ENCODE measurements at regions of chr9 and their contacts with region 1.

Region 1: GRCh38 chr9:100204796-100205195 is 105.8 kb downstream of the INVS start:
- DNase-seq: no peak
- H3K4me3 Mint-ChIP-seq: no peak overlapping the region
- H3K27ac Mint-ChIP-seq: no peak overlapping the region
- H3K4me1 Mint-ChIP-seq: peaks cover 5% of the 10 kb centered on the region
- H3K27me3 Mint-ChIP-seq: no peaks in the 10 kb centered on the region

Region 2: DNA sequence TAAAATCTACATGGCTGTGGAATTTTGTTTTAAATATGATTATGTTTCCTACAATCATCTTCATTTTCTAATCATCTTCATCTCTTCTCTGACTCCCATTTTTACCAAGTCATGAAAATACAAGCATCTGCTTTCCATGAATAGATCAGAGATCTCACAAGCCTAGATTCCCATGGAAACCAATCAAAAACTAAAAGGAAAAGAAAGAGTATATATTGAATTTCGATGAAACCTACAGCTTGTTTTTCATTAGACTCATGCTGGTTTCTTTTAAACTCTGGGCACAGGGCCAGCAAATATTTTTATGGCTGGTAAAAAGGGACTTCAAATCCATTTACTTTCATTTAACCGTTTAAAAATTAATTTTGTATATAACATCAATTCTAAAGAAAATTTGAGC is 54.6 kb before region 1 on chr9:
- intact Hi-C with region 1: loop called (anchors 5 kb)
- DNase-seq: no peak
- H3K4me3 Mint-ChIP-seq: no peak overlapping the region
- H3K27ac Mint-ChIP-seq: no peak overlapping the region
- H3K4me1 Mint-ChIP-seq: no peaks in the 10 kb centered on the region
- H3K27me3 Mint-ChIP-seq: no peaks in the 10 kb centered on the region

Measured in activated CD4-positive, alpha-beta T cell treated with anti-CD3 and anti-CD28 coated beads, Interleukin-2, amount 10 ng/mL, durations not matched to agents 24 days and 14 days (primary cell).